ENCODE measurements at regions of chr19 and their contacts with region 1.

Region 1: GRCh38 chr19:15418588-15419412 is at the start of gene AKAP8L:
- DNase-seq: peak; percentile 100
- ATAC-seq: peak; percentile 98
- H3K4me3 Mint-ChIP-seq: peak within 1 kb of the TSS; percentile 99
- H3K27ac Mint-ChIP-seq: peak within 1 kb of the TSS; percentile 99
- H3K4me1 Mint-ChIP-seq: peaks cover 41% of the 10 kb centered on the region
- H3K27me3 Mint-ChIP-seq: no peaks in the 10 kb centered on the region
- total RNA-seq, gene AKAP8L: 83.8 to 86.7 TPM

Region 2: GRCh38 chr19:15210323-15210781 is 208.4 kb before region 1 on chr19:
- CTCF ChIA-PET with region 1: no interaction called
- POLR2A ChIA-PET with region 1: no interaction called
- DNase-seq: no peak
- ATAC-seq: no peak
- H3K4me3 Mint-ChIP-seq: no peak overlapping the region
- H3K27ac Mint-ChIP-seq: no peak overlapping the region
- H3K4me1 Mint-ChIP-seq: no peaks in the 10 kb centered on the region
- H3K27me3 Mint-ChIP-seq: no peaks in the 10 kb centered on the region

Region 3: DNA sequence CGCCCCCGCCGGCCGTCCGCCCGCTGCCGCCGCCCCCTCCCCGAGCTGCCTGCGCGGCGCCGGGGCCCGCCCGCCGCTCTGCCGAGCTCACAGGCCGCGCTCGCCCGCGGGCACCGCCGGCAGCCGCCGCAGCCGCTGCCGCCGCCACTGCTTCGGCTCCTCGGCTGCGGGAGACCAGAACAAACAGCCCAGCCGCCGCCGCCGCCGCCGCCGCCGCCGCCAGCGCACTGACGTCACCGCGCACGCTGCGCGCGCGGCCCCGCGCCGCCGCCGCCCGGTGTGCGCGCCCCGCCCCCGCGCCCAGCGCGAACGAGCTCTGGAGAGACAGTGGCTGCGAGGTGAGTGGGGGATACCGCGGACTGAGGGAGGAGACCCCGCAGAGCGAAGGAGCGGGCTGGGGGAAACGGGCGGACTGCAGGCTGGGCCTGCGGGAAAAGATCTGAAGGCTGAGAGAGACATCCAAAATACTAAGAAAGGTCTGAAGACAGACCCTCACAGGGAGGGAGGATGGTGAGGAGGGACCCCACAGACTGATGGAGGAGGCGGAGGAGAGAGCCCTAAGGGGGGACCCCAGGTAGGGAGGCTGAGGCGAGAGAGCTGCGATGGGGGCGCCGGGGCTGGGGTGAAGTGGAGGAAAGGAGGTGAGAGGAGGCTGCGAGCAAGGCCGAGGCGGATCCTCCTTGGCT is 86.3 kb before region 1 on chr19 and contains the start of gene BRD4:
- CTCF ChIA-PET with region 1: interaction called, 5 read pairs
- POLR2A ChIA-PET with region 1: interaction called, 12 read pairs
- DNase-seq: peak; percentile 77
- ATAC-seq: peak; percentile 73
- H3K4me3 Mint-ChIP-seq: peak within 1 kb of the TSS; percentile 94
- H3K27ac Mint-ChIP-seq: peak within 1 kb of the TSS; percentile 94
- H3K4me1 Mint-ChIP-seq: peaks cover 38% of the 10 kb centered on the region
- H3K27me3 Mint-ChIP-seq: no peaks in the 10 kb centered on the region
- total RNA-seq, gene BRD4: 102 to 108 TPM

Region 4: GRCh38 chr19:15404097-15404779 is 14.6 kb before region 1 on chr19:
- CTCF ChIA-PET with region 1: interaction called, 11 read pairs
- POLR2A ChIA-PET with region 1: interaction called, 7 read pairs
- DNase-seq: no peak
- ATAC-seq: no peak
- H3K4me3 Mint-ChIP-seq: no peak overlapping the region
- H3K27ac Mint-ChIP-seq: peak overlapping the region; percentile 47
- H3K4me1 Mint-ChIP-seq: peaks cover 12% of the 10 kb centered on the region
- H3K27me3 Mint-ChIP-seq: no peaks in the 10 kb centered on the region

Region 5: GRCh38 chr19:15449620-15450527 is 31.1 kb after region 1 on chr19 and contains the start of gene WIZ:
- CTCF ChIA-PET with region 1: interaction called, 14 read pairs
- POLR2A ChIA-PET with region 1: interaction called, 13 read pairs
- DNase-seq: peak; percentile 82
- ATAC-seq: peak; percentile 65
- H3K4me3 Mint-ChIP-seq: peak within 1 kb of the TSS; percentile 64
- H3K27ac Mint-ChIP-seq: peak within 1 kb of the TSS; percentile 84
- H3K4me1 Mint-ChIP-seq: peaks cover 33% of the 10 kb centered on the region
- H3K27me3 Mint-ChIP-seq: no peaks in the 10 kb centered on the region
- total RNA-seq, gene WIZ: 31.6 to 32.7 TPM

Region 6: DNA sequence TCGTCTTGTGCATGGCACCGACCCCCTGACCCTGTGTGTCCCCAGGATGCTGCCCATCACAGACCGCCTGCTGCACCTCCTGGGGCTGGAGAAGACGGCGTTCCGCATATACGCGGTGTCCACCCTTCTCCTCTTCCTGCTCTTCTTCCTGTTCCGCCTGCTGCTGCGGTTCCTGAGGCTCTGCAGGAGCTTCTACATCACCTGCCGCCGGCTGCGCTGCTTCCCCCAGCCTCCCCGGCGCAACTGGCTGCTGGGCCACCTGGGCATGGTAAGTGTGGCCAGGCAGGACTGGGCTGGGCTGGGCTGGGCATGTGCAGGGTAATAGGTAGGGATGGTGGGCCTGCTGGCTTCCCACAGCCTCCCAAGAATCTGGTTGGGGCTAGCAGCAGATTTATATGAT is 106.5 kb after region 1 on chr19:
- CTCF ChIA-PET with region 1: no interaction called
- POLR2A ChIA-PET with region 1: no interaction called
- DNase-seq: no peak
- ATAC-seq: no peak
- H3K4me3 Mint-ChIP-seq: no peak overlapping the region
- H3K27ac Mint-ChIP-seq: peak overlapping the region; percentile 63
- H3K4me1 Mint-ChIP-seq: peaks cover 18% of the 10 kb centered on the region
- H3K27me3 Mint-ChIP-seq: no peaks in the 10 kb centered on the region

Region 7: DNA sequence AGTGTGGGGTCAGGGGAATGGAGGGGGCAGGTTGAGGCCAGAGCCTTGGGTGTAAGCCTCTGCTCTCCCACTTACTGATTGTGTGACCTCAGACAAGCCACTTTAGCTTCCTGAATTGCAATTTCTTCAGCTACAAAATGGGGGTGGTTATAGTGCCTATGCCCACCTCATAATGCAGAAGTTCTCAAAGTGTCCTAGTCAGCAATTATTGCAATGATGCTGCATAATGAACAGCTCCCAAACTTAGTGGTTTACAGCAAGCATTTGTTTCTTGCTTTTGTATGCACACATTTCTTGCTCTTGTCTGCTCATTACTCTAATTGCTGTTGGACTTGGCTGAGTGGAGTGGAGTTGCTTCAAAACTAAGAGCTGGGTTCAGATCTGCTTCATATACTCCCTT is 125.5 kb after region 1 on chr19:
- CTCF ChIA-PET with region 1: interaction called, 10 read pairs
- POLR2A ChIA-PET with region 1: no interaction called
- DNase-seq: no peak
- ATAC-seq: no peak
- H3K4me3 Mint-ChIP-seq: no peak overlapping the region
- H3K27ac Mint-ChIP-seq: no peak overlapping the region
- H3K4me1 Mint-ChIP-seq: no peaks in the 10 kb centered on the region
- H3K27me3 Mint-ChIP-seq: no peaks in the 10 kb centered on the region

Region 8: DNA sequence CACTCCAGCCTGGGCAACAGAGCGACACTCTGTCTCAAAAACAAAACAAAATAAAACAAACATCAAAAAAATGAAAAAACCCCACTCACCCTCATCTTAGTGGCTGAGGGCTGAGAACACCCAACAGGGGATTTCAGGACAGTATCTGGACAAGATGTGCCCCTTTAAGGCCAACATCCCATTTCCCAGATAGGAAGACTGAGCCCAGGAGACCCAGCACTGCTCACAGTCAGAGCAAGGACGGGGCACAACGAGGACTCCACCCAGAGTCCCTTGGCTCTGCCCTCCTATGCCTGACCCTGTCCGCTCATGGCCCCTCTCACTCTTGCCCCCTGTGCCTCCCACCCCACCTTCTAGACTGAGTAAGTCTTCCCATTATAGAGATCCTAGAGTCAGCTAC is 143.3 kb after region 1 on chr19:
- CTCF ChIA-PET with region 1: interaction called, 259 read pairs
- POLR2A ChIA-PET with region 1: interaction called, 3 read pairs
- DNase-seq: no peak
- ATAC-seq: no peak
- H3K4me3 Mint-ChIP-seq: no peak overlapping the region
- H3K27ac Mint-ChIP-seq: no peak overlapping the region
- H3K4me1 Mint-ChIP-seq: peaks cover under 1% of the 10 kb centered on the region
- H3K27me3 Mint-ChIP-seq: peaks cover 15% of the 10 kb centered on the region